CD14-positive monocyte (primary cell): ENCODE measurements at regions of chr3 and their contacts with region 1.

Region 1: DNA sequence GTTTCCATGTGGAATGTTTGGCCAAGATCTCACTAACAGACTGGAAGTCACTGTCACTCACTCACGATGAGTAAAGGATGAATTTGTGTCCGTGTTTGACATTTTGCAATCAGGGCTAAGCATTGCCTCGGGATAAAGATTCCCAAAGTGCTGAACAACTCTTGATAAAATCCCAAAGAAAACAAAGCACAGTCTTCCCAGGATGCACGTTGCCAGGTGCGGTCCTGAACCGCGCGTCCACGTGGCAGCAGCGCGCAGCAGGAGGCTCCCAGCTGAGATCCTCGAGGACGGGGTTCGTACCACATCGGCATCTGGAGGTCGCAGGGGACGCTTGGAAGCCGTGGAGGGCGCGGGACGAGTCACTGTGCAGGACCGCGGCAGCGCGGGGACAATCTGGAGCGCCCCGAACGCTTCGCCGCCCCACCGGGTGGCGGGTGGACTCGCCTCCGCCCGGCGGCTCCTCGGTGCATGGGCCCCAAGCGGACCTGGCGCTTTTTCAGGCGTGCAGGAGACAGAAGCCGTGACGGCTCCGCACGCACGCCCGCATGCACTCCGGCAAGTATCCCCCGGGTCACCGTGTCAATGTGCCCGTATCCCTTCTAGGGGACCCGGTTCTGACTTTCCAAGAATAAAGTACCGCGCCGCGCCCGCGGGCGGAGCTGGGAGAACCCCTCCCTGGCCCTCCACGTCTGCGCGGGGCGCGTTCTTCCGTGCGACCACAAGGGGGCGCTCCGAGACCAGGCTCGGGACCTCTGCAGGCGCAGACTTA is 17.7 kb downstream of the CPN2 start:
- DNase-seq: peak; percentile 60 to 75 (median 64)
- H3K4me3 ChIP-seq: peak overlapping the region in 2 of 3 experiments; percentile 7 to 62
- H3K4me3 Mint-ChIP-seq: peak overlapping the region; percentile 71 to 88
- H3K27ac ChIP-seq: no peak overlapping the region
- H3K27ac Mint-ChIP-seq: no peak overlapping the region
- H3K4me1 ChIP-seq: peaks cover 6 to 9% of the 10 kb centered on the region in 2 donors
- H3K4me1 Mint-ChIP-seq: peaks cover 11% of the 10 kb centered on the region
- H3K27me3 ChIP-seq: peaks cover 3 to 14% of the 10 kb centered on the region in 2 donors
- H3K27me3 Mint-ChIP-seq: peaks cover 27 to 44% (median 34%) of the 10 kb centered on the region in 3 donors
- CTCF ChIP-seq: peak; percentile 98

Region 2: DNA sequence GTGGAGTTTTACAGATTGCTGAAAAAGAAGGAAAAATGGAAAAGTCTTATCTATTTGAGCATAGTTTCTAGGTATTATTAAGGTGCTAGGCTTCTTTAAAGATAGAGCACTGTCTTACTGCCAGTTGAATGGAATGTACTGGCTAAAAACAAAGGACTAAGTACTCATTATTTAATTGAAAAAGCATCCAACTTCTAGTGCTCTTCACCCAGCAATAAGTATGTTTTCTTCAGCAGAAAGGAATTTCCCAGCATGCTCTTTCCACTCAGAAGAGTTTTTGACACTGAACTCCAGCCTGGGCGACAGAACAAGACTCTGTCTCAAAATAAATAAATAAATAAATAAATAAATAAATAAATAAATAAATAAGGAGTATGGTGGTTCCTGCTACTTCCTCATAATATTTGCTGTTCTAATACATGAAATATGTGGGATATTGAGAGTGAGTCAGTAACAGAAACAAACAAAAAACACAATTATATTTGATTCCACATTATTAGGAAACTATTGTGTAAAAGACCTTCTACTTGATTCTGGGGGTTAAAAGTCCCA is 849.3 kb before region 1 on chr3:
- intact Hi-C with region 1: no loop called
- DNase-seq: no peak
- H3K4me3 ChIP-seq: no peak overlapping the region
- H3K4me3 Mint-ChIP-seq: no peak overlapping the region
- H3K27ac ChIP-seq: no peak overlapping the region
- H3K27ac Mint-ChIP-seq: no peak overlapping the region
- H3K4me1 ChIP-seq: peaks cover 0 to under 1% of the 10 kb centered on the region in 2 donors
- H3K4me1 Mint-ChIP-seq: no peaks in the 10 kb centered on the region
- H3K27me3 ChIP-seq: no peaks in the 10 kb centered on the region
- H3K27me3 Mint-ChIP-seq: peaks cover 0 to 5% (median 2%) of the 10 kb centered on the region in 3 donors
- CTCF ChIP-seq: no peak

Region 3: GRCh38 chr3:194395778-194396547 is 62.6 kb after region 1 on chr3:
- intact Hi-C with region 1: loop called (anchors 5 kb)
- DNase-seq: no peak
- H3K4me3 ChIP-seq: peak overlapping the region in 1 of 3 experiments; percentile 60
- H3K4me3 Mint-ChIP-seq: peak overlapping the region; percentile 57 to 82
- H3K27ac ChIP-seq: no peak overlapping the region
- H3K27ac Mint-ChIP-seq: no peak overlapping the region
- H3K4me1 ChIP-seq: peaks cover 21 to 25% of the 10 kb centered on the region in 2 donors
- H3K4me1 Mint-ChIP-seq: peaks cover 27% of the 10 kb centered on the region
- H3K27me3 ChIP-seq: peaks cover 30 to 61% of the 10 kb centered on the region in 2 donors
- H3K27me3 Mint-ChIP-seq: peaks cover 62 to 69% (median 64%) of the 10 kb centered on the region in 3 donors
- CTCF ChIP-seq: no peak

Region 4: GRCh38 chr3:194404365-194405140 is 71.2 kb after region 1 on chr3:
- intact Hi-C with region 1: loop called (anchors 5 kb)
- DNase-seq: peak; percentile 9 to 41 (median 24)
- H3K4me3 ChIP-seq: no peak overlapping the region
- H3K4me3 Mint-ChIP-seq: no peak overlapping the region
- H3K27ac ChIP-seq: no peak overlapping the region
- H3K27ac Mint-ChIP-seq: no peak overlapping the region
- H3K4me1 ChIP-seq: no peaks in the 10 kb centered on the region
- H3K4me1 Mint-ChIP-seq: no peaks in the 10 kb centered on the region
- H3K27me3 ChIP-seq: peaks cover 0 to 7% of the 10 kb centered on the region in 2 donors
- H3K27me3 Mint-ChIP-seq: peaks cover 6 to 7% (median 7%) of the 10 kb centered on the region in 3 donors
- CTCF ChIP-seq: peak; percentile 85

Region 5: GRCh38 chr3:194512895-194513601 is 179.7 kb after region 1 on chr3:
- intact Hi-C with region 1: no loop called
- DNase-seq: no peak
- H3K4me3 ChIP-seq: no peak overlapping the region
- H3K4me3 Mint-ChIP-seq: no peak overlapping the region
- H3K27ac ChIP-seq: no peak overlapping the region
- H3K27ac Mint-ChIP-seq: no peak overlapping the region
- H3K4me1 ChIP-seq: peaks cover 13% of the 10 kb centered on the region in 2 donors
- H3K4me1 Mint-ChIP-seq: peaks cover 14% of the 10 kb centered on the region
- H3K27me3 ChIP-seq: no peaks in the 10 kb centered on the region
- H3K27me3 Mint-ChIP-seq: peaks cover 0 to 10% (median 3%) of the 10 kb centered on the region in 3 donors
- CTCF ChIP-seq: no peak